ENCODE measurements at regions of chr12 and their contacts with region 1.

Region 1: GRCh38 chr12:76158518-76159321 is 74.2 kb upstream of the NAP1L1 start:
- DNase-seq: peak; percentile 73
- H3K4me3 Mint-ChIP-seq: peak overlapping the region; percentile 38
- H3K27ac Mint-ChIP-seq: peak overlapping the region; percentile 46
- H3K4me1 Mint-ChIP-seq: peaks cover 30% of the 10 kb centered on the region
- H3K27me3 Mint-ChIP-seq: peaks cover 12% of the 10 kb centered on the region

Region 2: GRCh38 chr12:75480469-75480949 is 678.2 kb before region 1 on chr12 and contains the start of gene GLIPR1:
- intact Hi-C with region 1: loop called (anchors 1 kb)
- DNase-seq: peak; percentile 64
- H3K4me3 Mint-ChIP-seq: peak within 1 kb of the TSS; percentile 87
- H3K27ac Mint-ChIP-seq: peak within 1 kb of the TSS; percentile 92
- H3K4me1 Mint-ChIP-seq: peaks cover 73% of the 10 kb centered on the region
- H3K27me3 Mint-ChIP-seq: peaks cover 1% of the 10 kb centered on the region
- total RNA-seq, gene GLIPR1: 7.4 and 7.6 TPM in 2 replicates

Region 3: GRCh38 chr12:75944097-75944904 is 214.4 kb before region 1 on chr12:
- intact Hi-C with region 1: loop called (anchors 2 kb)
- DNase-seq: no peak
- H3K4me3 Mint-ChIP-seq: peak overlapping the region; percentile 52
- H3K27ac Mint-ChIP-seq: peak overlapping the region; percentile 97
- H3K4me1 Mint-ChIP-seq: peaks cover 32% of the 10 kb centered on the region
- H3K27me3 Mint-ChIP-seq: no peaks in the 10 kb centered on the region

Region 4: GRCh38 chr12:75977952-75978671 is 180.6 kb before region 1 on chr12:
- intact Hi-C with region 1: no loop called
- DNase-seq: peak; percentile 82
- H3K4me3 Mint-ChIP-seq: peak overlapping the region; percentile 67
- H3K27ac Mint-ChIP-seq: peak overlapping the region; percentile 96
- H3K4me1 Mint-ChIP-seq: peaks cover 64% of the 10 kb centered on the region
- H3K27me3 Mint-ChIP-seq: no peaks in the 10 kb centered on the region

Region 5: DNA sequence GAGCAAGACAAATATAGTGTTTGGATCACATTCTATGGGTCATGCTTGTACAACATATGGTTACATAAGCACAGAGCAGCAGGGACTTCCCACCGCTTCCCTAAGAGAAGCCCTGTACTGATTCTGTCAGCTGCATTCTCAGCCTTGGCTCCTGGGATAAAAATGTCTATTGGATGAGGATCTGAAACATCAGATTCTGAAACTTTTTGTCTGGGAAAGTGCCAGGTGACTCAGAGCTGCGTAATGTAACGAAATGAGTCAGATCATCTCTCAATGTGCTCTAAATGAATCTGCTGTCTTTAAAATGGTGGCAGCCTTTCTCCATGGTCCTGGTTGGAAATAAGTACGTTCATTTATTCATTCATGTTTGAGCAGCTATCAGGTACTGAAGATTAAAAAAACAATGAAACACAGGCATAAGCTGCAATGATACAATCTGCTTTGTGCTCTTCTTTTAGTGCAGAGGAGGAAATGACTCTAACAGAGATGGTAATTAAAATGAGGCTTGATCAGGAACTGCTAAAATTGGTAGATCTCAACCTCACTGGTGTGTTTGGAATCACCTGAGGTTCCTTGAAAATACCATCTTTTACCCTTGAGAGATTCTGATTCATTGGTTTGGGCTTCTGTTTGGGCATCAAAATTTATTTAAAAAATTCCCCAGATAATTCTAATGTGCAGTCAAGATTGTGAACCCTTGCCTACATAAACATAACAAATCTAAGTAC is 24.9 kb after region 1 on chr12:
- intact Hi-C with region 1: loop called (anchors 1 kb)
- DNase-seq: peak; percentile 14
- H3K4me3 Mint-ChIP-seq: no peak overlapping the region
- H3K27ac Mint-ChIP-seq: no peak overlapping the region
- H3K4me1 Mint-ChIP-seq: peaks cover 30% of the 10 kb centered on the region
- H3K27me3 Mint-ChIP-seq: peaks cover 37% of the 10 kb centered on the region

Region 6: DNA sequence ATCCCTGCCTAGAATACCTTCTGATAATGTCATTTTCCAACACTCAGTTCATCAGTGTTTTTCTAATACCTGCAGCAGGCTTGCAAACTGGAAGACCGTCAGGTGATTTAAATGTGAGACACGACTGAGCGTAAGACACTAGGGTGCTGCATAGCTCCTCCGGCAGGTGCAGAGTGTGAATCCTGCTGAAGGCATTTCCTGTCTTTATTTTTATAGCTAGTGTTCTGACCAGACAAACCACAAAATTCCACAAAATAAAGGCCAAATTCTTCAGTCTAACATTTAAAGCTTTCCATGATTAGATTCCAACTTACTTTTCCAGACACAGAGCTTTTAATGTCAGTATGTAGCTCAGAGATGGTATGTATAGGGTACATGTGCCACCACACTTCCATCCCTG is 118.8 kb after region 1 on chr12:
- intact Hi-C with region 1: loop called (anchors 1 kb)
- DNase-seq: no peak
- H3K4me3 Mint-ChIP-seq: no peak overlapping the region
- H3K27ac Mint-ChIP-seq: no peak overlapping the region
- H3K4me1 Mint-ChIP-seq: peaks cover 14% of the 10 kb centered on the region
- H3K27me3 Mint-ChIP-seq: peaks cover 9% of the 10 kb centered on the region

Measured in activated T-helper 2 cell treated with anti-CD3 and anti-CD28 coated beads, Interferon-gamma antibody, Interleukin-2, Interleukin-4, amounts not matched to agents 10 μg/mL and 5 μg/mL and 100 μg/mL, durations not matched to agents 14 hours and 24 hours and 36 hours (primary cell).